H1 (cell line): ENCODE measurements at regions of chr3 and their contacts with region 1.

Region 1: DNA sequence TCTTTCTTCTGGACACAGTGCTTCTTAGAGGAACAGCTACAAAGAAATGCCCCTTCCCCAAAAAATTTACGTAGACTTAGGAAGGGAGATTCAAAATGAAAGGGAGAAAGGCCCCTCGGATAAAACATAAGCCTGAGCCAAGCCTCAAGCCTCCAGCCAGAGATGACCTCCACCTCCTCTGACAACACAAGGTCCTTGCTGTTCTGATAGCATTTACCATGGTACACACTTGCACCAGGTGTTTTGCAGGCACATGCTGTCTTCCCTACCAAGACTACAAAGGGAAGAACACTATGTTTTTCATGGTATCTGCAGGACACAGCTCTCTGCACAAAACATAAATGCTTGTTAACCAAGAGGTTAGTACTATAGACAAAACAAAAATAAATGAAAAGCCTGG is 27.8 kb downstream of the RYK start:
- DNase-seq: no peak
- H3K4me3 ChIP-seq: no peak overlapping the region
- H3K27ac ChIP-seq: no peak overlapping the region
- H3K4me1 ChIP-seq: peaks cover 0 to 5% (median 0%) of the 10 kb centered on the region in 4 experiments; a peak in 1 of 7 replicates
- H3K27me3 ChIP-seq: no peaks in the 10 kb centered on the region
- CTCF ChIP-seq: no peak
- EP300 ChIP-seq: no peak
- POLR2A ChIP-seq: no peak
- RAD21 ChIP-seq: no peak

Region 2: DNA sequence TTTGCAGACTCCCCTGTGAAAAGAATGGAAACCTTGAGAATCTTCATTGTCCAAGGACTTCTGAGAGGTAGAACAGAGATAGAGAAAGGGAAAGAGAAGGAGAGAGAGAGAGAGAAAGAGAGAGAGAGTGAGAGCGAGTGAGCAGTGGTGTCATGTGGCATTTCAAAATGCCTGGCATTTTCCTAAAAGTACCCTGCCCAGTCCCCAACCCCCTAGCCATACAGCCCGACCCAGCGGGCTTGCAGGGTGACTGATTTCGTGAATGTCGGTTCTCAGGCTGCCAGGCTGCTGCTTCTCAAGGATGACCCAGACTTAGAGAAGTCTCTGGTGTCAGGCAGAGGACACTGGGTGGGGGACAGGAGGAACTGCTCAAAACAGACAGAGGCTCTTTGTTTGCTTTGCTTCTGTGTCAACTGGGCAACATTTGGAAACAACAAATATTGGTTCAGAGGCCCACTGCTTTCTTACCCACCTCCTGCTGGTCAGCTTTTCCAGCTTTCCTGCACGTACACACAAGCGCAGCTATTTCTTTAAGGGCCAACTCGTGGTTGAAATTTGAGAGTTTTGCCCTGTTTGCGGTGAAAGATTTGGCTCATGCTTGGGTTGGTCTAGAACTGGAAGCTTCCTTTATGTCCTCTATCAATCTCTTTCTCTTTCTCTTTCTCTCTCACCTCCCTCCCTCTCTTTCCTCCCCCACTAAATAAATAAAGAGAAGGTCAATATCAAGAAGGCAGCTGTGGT is 480.3 kb before region 1 on chr3:
- CTCF ChIA-PET with region 1: no interaction called
- POLR2A ChIA-PET with region 1: no interaction called
- DNase-seq: no peak
- H3K4me3 ChIP-seq: no peak overlapping the region
- H3K27ac ChIP-seq: no peak overlapping the region
- H3K4me1 ChIP-seq: no peaks in the 10 kb centered on the region; a peak in 1 of 7 replicates
- H3K27me3 ChIP-seq: no peaks in the 10 kb centered on the region
- CTCF ChIP-seq: no peak
- EP300 ChIP-seq: no peak
- POLR2A ChIP-seq: no peak
- RAD21 ChIP-seq: no peak

Region 3: GRCh38 chr3:134299185-134299887 is 76.5 kb after region 1 on chr3:
- CTCF ChIA-PET with region 1: interaction called, 20 read pairs
- POLR2A ChIA-PET with region 1: no interaction called
- DNase-seq: no peak
- H3K4me3 ChIP-seq: no peak overlapping the region
- H3K27ac ChIP-seq: no peak overlapping the region
- H3K4me1 ChIP-seq: 0 out of 7 replicates have a peak, but pooled peaks cover 0 to 2% (median 0%) of the 10 kb centered on the region in 4 experiments
- H3K27me3 ChIP-seq: no peaks in the 10 kb centered on the region
- CTCF ChIP-seq: peak in 2 of 3 experiments; percentile 32 to 43; a peak in 3 of 4 replicates
- EP300 ChIP-seq: no peak
- POLR2A ChIP-seq: no peak
- RAD21 ChIP-seq: peak; percentile 52 to 73